ENCODE measurements at regions of chr17 and their contacts with region 1.

Region 1: DNA sequence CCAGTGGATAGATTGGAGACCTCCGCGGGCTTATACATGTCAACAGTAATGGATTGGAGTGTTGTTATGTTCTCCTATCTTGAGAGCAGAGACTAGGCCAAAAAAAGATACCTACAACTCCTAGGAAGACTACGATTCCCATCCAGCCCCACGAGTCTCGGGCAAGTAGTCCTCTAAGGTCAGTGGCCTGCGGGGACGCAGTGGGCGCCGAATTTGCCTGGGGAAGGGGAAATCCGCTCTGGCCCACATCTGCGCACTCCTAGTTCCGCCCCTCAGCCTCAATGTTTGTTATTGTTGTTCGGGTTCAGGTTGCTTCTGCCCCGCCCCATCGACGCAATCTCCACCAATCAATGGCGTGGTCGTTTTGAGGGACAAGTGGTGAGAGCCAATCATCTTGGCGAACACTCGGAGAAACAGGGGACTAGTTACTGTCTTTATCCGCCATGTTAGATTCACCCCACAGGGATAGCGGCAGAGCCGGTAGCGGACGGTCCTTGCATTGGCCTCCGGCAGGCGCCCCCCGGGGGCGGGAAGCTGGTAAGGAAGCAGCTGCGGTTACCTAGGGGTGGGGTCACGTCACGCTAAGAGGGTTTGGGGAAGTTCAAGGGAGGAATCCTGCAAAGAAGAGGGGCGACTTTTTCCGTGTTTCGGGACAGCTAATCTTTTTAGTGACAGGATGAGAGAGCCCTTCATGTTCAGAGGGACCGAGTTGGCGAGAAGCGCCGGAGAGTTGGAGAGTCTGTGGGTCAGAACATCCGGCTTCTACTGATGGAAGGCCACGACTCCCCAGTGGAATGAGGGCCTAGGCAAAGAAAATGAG is at the start of gene NBR1:
- DNase-seq: peak; percentile 76 to 99 (median 96)
- ATAC-seq: peak; percentile 78 to 83
- H3K4me3 Mint-ChIP-seq: no peak within 1 kb of the TSS
- H3K27ac Mint-ChIP-seq: no peak within 1 kb of the TSS
- H3K4me1 Mint-ChIP-seq: peaks cover 14 to 37% (median 28%) of the 10 kb centered on the region in 4 donors
- H3K27me3 Mint-ChIP-seq: no peaks in the 10 kb centered on the region
- polyA plus RNA-seq, gene NBR1: 63.3 to 73.2 (median 68.1) TPM

Region 2: DNA sequence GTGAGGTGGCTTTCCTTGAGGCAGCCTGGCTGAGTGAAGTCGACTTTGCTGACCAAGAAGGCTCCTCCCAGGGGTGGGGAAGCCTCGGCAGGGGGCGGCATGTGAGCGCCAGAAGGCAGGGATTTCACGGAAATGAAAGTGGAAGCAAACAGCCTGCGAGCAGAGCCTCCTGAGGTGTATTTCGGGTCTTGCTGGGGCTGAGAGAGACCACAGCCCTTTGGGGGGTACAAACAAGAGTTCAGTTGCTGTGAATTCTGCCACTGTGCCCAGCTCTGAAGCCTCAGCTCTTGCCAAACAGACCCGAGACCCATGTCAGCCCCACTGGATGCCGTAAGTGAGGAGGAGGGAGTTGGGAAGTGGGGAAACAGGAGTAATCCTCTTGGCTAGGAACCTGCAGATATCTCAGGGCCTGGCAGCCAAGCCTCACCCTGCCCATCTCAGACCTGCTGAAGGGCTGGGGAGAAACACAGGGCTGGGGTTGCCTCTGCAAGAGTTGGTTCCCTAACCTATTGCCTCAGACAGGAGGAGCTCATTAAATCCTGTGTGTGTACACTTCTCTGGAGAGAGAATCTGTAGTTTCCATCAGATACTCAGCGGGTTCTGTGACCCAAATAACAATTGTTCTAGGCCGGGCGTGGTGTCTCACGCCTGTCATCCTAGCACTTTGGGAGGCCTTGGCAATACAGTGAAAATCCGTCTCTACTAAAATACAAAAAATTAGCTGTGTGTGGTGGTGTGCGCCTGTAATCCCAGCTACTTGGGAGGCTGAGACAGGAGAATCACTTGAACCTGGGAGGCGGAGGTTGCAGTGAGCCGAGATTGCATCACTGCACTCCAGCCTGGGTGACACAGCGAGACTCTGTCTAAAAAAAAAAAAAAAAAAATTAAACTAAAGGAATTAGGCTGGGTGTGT is 164.1 kb before region 1 on chr17 and contains the start of gene IFI35:
- POLR2A ChIA-PET with region 1: interaction called, 11 read pairs
- DNase-seq: peak; percentile 66 to 91 (median 82)
- ATAC-seq: peak; percentile 99
- H3K4me3 Mint-ChIP-seq: peak within 1 kb of the TSS; percentile 98 to 100 (median 99)
- H3K27ac Mint-ChIP-seq: peak within 1 kb of the TSS; percentile 98 to 100 (median 99)
- H3K4me1 Mint-ChIP-seq: peaks cover 8 to 35% (median 27%) of the 10 kb centered on the region in 4 donors
- H3K27me3 Mint-ChIP-seq: no peaks in the 10 kb centered on the region
- polyA plus RNA-seq, gene IFI35: 44.8 to 49.8 (median 47.2) TPM

Region 3: DNA sequence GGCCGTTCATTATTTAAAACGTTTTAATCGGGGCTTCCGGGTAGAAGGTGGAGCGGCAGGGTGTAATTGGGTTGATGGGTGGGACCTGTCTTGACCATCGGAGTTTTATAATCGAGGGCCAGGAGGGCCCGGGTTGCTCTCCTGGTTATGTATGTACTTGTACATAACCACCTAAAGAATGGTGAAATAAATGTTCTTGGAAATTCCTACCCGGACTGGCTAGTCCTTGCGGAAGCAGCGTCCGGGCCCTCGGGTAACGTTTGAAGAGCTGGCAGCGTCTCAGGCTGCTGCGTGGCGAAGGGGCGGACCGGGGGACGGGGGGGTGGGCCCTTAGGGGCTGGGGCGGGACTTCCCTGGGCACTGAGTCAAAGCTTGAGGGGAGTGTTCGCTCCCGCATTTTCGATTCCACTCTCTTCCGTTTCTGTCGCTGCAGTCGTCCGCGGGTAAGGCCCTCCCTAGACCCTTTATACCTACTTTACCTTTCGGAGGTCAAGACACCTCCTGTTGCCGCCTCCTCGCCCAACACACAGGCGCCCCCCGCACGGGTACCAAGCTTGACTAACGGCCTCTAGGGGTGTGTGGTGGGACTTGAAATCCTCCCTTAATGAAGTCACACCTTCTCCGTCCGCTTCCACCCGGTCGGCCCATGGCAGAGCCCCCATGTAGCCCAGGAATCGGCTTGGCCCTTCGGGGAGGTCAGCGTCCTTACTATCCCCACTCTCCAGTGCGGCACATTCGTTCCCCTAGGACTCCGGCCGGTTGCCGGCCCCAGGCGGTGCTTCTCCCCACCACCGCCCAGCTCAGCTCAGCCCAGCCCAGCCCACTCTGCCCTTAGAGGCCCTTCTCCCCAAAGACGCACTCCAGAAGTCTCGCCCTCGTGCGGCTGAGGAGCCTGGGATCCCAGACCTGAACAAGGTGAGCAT is 40.8 kb after region 1 on chr17 and contains the start of gene TMEM106A:
- POLR2A ChIA-PET with region 1: interaction called, 20 read pairs
- DNase-seq: peak; percentile 54 to 85 (median 66)
- ATAC-seq: peak; percentile 88 to 90
- H3K4me3 Mint-ChIP-seq: peak within 1 kb of the TSS; percentile 88 to 100 (median 99)
- H3K27ac Mint-ChIP-seq: peak within 1 kb of the TSS; percentile 95 to 99 (median 97)
- H3K4me1 Mint-ChIP-seq: peaks cover 24 to 45% (median 41%) of the 10 kb centered on the region in 4 donors
- H3K27me3 Mint-ChIP-seq: no peaks in the 10 kb centered on the region
- polyA plus RNA-seq, gene TMEM106A: 4.1 to 5.5 (median 4.2) TPM

Measured in naive thymus-derived CD8-positive, alpha-beta T cell (primary cell).